Activated CD4-positive, alpha-beta T cell treated with anti-CD3 and anti-CD28 coated beads for 36 hours (primary cell): ENCODE measurements at regions of chr7 and their contacts with region 1.

Region 1: GRCh38 chr7:35694781-35695472 is at the start of gene HERPUD2:
- DNase-seq: peak; percentile 96
- ATAC-seq: peak; percentile 77
- H3K4me3 Mint-ChIP-seq: peak within 1 kb of the TSS; percentile 97
- H3K27ac Mint-ChIP-seq: peak within 1 kb of the TSS; percentile 98
- H3K4me1 Mint-ChIP-seq: peaks cover 42% of the 10 kb centered on the region
- H3K27me3 Mint-ChIP-seq: no peaks in the 10 kb centered on the region
- total RNA-seq, gene HERPUD2: 22.1 to 26.7 TPM

Region 2: DNA sequence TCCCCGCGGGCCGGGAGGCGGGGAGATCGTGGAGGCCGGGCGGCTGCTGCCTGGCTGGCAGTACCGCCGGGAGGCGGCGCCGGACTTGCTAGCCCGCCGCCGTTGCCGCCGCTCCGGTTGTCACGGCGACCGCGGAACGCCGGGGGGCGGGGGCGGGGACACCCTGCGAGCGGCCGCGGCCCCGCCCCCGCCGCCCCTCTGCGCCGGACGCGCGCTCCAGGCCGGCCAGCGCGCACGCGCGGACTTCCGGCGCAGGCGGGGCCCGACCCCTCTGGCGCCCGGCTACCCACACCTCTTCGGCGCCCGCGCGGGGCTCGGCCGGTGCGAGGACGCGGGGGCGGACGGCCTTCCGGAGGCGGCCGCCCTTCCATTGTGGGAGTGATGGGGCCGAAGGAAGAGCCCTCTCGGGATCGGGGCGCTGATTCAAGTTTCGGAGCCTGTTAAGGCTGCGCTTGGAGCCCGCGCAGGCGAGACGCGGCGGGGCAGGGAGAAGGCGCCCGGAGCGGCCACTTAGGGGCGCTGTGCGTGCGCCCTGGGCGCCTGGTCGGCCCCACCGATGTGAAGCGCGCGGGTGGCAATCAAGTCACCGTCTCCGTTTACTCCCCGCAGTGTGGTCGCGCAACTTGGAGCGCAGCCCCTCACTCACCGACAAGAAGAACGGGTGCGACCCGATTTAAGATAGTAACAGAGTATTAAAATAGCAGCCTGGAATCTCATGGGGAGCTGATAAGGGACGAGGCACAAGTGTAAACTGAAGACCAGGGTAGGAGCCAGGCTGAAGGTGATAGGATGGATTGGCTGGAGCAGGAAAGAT is 657.2 kb before region 1 on chr7:
- CTCF ChIA-PET with region 1: no interaction called
- POLR2A ChIA-PET with region 1: no interaction called
- intact Hi-C with region 1: loop called in 1 of 2 experiments (anchors 2 kb)
- DNase-seq: peak; percentile 93
- ATAC-seq: peak; percentile 82
- H3K4me3 Mint-ChIP-seq: peak overlapping the region; percentile 77
- H3K27ac Mint-ChIP-seq: peak overlapping the region; percentile 89
- H3K4me1 Mint-ChIP-seq: peaks cover 25% of the 10 kb centered on the region
- H3K27me3 Mint-ChIP-seq: no peaks in the 10 kb centered on the region

Region 3: DNA sequence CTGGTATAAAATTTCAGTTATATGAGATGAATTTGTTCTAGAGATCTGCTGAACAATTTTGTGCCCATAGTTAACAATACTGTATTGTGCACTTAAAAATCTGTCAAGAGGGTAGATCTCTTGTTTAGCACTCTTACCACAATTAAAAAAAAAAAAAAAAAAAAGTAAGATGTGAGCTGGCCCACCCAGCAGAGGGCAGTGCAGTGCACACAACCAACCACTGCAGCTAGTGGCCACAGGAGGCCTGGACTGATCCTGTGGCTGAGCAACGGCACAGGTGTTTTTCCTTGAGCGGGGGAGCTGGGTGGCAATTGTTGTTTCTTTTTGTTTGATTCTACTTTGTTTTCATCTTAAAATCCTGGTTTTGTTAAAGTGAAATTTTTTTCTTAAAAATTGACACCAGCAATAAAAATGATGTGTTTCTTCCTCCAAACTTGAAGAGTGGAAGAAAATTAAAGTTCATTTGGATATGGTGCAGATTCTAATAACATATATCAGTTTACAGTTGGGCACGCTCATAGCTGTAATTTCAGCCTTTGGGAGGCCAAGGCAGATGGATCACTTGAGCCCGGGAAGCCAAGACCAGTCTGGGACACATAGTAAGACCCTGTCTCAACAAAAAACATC is 269.9 kb before region 1 on chr7:
- CTCF ChIA-PET with region 1: no interaction called
- POLR2A ChIA-PET with region 1: no interaction called
- intact Hi-C with region 1: no loop called
- DNase-seq: peak; percentile 75
- ATAC-seq: peak; percentile 74
- H3K4me3 Mint-ChIP-seq: no peak overlapping the region
- H3K27ac Mint-ChIP-seq: no peak overlapping the region
- H3K4me1 Mint-ChIP-seq: peaks cover 5% of the 10 kb centered on the region
- H3K27me3 Mint-ChIP-seq: peaks cover 3% of the 10 kb centered on the region

Region 4: GRCh38 chr7:35576031-35576573 is 118.8 kb before region 1 on chr7:
- CTCF ChIA-PET with region 1: no interaction called
- POLR2A ChIA-PET with region 1: no interaction called
- intact Hi-C with region 1: no loop called
- DNase-seq: no peak
- ATAC-seq: no peak
- H3K4me3 Mint-ChIP-seq: no peak overlapping the region
- H3K27ac Mint-ChIP-seq: no peak overlapping the region
- H3K4me1 Mint-ChIP-seq: no peaks in the 10 kb centered on the region
- H3K27me3 Mint-ChIP-seq: no peaks in the 10 kb centered on the region

Region 5: GRCh38 chr7:35681231-35682029 is 13.5 kb before region 1 on chr7:
- CTCF ChIA-PET with region 1: interaction called, 5 read pairs
- POLR2A ChIA-PET with region 1: no interaction called
- intact Hi-C with region 1: loop called (anchors 1 kb)
- DNase-seq: no peak
- ATAC-seq: peak; percentile 68
- H3K4me3 Mint-ChIP-seq: no peak overlapping the region
- H3K27ac Mint-ChIP-seq: peak overlapping the region; percentile 4
- H3K4me1 Mint-ChIP-seq: peaks cover 64% of the 10 kb centered on the region
- H3K27me3 Mint-ChIP-seq: no peaks in the 10 kb centered on the region

Region 6: DNA sequence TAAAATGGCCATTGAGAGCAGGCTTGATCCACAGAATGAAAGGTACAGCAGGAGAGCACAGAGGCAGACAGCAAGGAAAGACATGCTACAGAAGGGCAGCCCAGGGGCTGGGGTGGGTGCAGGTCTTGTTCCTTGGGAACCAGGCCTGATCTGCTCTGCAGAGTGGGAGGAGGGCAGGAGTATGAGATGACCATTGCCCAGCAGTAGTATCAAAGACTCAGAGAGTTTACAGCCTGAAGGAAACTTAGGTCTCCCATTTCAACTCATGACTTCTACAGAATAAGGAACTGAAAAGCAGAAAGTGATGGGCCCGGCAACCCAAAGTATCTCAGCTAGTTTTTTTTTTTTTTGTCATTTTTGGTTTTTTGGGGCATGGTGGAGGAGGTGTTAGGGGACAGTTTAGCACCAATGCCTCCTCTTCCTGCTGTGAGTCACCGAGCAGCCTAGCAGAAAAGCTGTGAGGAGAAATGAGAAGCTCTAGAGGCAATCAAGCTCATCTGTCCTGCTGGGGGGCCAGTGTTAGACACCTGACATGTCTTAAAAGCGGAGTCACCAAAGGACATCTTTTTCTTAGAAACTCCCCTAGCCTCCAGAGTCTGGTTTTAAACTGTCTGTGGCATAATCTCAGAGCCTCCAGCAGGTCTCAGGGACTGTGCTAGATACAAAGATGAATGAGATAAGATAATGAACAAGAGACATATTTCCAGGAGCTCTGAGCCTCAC is 34.3 kb after region 1 on chr7:
- CTCF ChIA-PET with region 1: interaction called, 15 read pairs
- POLR2A ChIA-PET with region 1: interaction called, 4 read pairs
- intact Hi-C with region 1: no loop called
- DNase-seq: peak; percentile 60
- ATAC-seq: peak; percentile 72
- H3K4me3 Mint-ChIP-seq: no peak overlapping the region
- H3K27ac Mint-ChIP-seq: no peak overlapping the region
- H3K4me1 Mint-ChIP-seq: peaks cover 57% of the 10 kb centered on the region
- H3K27me3 Mint-ChIP-seq: no peaks in the 10 kb centered on the region

Region 7: DNA sequence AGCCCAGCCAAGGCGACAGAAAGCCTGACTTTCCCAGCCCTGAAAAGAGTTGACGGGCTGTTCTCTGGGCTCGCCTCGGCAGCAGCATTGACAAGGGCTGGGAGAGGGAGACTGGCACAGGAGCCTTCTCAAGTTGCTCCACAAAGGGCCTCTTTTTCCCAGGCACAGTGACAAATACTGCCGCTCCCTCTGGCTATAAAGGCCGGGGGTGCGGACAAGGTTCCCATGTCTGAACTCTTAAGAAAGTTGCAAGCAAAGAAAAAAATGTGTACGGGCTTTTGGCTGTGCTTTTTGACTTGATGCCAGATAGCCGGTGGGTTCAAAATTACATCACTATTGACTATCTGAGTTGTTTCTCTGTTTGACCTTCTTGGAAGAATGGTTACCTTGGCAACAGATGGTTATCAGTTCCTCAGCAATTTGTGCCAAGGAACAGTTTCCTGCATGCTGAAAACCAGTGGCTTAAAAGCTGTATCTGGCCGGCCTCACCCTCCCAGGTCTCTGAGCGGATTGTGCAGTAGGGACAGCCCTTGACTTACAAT is 342.3 kb after region 1 on chr7:
- CTCF ChIA-PET with region 1: no interaction called
- POLR2A ChIA-PET with region 1: no interaction called
- intact Hi-C with region 1: no loop called
- DNase-seq: no peak
- ATAC-seq: no peak
- H3K4me3 Mint-ChIP-seq: no peak overlapping the region
- H3K27ac Mint-ChIP-seq: no peak overlapping the region
- H3K4me1 Mint-ChIP-seq: no peaks in the 10 kb centered on the region
- H3K27me3 Mint-ChIP-seq: peaks cover 7% of the 10 kb centered on the region

Region 8: DNA sequence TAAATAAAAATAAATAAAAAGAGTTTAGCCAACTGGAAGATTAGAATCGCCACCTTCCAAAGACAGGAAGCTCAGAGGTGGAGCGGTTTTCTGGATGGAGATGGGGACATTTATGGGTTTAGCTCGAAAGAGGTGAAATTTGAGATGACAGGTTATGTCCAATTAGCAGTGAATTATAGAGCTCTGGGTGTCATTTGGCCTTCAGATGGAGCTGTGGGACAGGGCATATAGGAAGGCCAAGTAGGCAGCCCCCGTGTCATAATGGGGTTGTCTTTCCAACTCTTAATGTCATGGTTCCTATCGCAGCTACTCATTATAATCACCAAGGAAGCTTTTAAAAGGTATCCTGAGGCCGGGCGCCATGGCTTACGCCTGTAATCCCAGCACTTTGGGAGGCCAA is 437.1 kb after region 1 on chr7:
- CTCF ChIA-PET with region 1: no interaction called
- POLR2A ChIA-PET with region 1: no interaction called
- intact Hi-C with region 1: no loop called
- DNase-seq: no peak
- ATAC-seq: no peak
- H3K4me3 Mint-ChIP-seq: no peak overlapping the region
- H3K27ac Mint-ChIP-seq: no peak overlapping the region
- H3K4me1 Mint-ChIP-seq: peaks cover 2% of the 10 kb centered on the region
- H3K27me3 Mint-ChIP-seq: no peaks in the 10 kb centered on the region

Region 9: DNA sequence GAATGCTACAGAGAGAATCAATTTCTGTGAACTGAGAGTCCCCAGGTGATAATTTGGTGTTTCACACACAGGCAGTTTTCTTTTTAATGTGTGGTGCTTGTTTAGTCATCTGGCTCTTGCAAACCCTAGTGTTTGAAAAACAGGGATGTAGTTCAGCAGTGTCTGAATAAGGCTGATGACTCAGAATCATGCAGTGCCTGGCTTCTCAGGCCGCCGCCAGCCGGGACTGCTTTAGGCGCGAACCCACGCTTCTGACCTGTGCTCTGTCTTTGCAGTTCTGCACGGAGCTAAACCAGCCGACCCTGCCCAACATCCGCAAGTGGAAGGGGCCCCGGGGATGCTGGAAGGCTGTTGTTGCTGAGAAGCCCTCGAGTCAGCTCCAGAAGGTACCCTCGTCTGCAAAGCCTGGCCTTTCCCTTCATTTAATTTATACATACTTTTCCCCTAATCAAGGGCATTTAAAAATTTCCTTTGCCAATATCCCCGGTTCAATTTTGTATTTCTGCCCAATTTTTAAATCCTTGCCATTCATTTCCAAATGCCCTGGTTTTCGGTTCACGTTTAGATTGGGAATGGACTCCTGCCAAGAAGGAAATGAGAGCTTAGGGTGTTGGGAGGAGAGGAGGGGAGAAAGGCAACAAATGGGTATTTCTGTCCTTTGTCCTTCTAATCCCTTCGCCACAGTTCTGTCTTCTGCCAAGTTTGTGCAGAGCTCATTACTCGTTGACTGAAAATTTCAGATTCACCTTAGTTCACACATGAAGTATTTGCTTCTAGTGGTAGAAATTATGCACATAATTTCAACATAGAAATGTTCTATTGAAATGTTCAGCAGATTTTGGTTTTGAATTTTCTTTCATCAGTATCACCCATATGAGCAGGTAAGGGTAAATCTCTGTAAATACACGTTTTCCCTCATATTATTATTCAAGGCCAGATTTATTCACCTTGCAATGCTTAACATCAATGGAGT is 586.2 kb after region 1 on chr7:
- CTCF ChIA-PET with region 1: no interaction called
- POLR2A ChIA-PET with region 1: no interaction called
- intact Hi-C with region 1: loop called (anchors 10 kb)
- DNase-seq: peak; percentile 61
- ATAC-seq: peak; percentile 78
- H3K4me3 Mint-ChIP-seq: no peak overlapping the region
- H3K27ac Mint-ChIP-seq: no peak overlapping the region
- H3K4me1 Mint-ChIP-seq: peaks cover 52% of the 10 kb centered on the region
- H3K27me3 Mint-ChIP-seq: no peaks in the 10 kb centered on the region